ENCODE measurements at regions of chr17 and their contacts with region 1.

Region 1: GRCh38 chr17:8189711-8190477 is at the start of gene BORCS6:
- DNase-seq: peak; percentile 95 to 98
- H3K4me3 ChIP-seq: peak within 1 kb of the TSS; percentile 68 to 81
- H3K27ac ChIP-seq: peak within 1 kb of the TSS; percentile 97 to 99
- H3K4me1 ChIP-seq: peaks cover 8 to 13% of the 10 kb centered on the region in 2 donors
- H3K27me3 ChIP-seq: no peaks in the 10 kb centered on the region
- CTCF ChIP-seq: peak in 2 of 4 experiments; percentile 22 to 23
- POLR2A ChIP-seq: peak; percentile 85 to 89
- total RNA-seq, gene BORCS6: under 0.01 to 9.0 (median 6.1) TPM

Region 2: DNA sequence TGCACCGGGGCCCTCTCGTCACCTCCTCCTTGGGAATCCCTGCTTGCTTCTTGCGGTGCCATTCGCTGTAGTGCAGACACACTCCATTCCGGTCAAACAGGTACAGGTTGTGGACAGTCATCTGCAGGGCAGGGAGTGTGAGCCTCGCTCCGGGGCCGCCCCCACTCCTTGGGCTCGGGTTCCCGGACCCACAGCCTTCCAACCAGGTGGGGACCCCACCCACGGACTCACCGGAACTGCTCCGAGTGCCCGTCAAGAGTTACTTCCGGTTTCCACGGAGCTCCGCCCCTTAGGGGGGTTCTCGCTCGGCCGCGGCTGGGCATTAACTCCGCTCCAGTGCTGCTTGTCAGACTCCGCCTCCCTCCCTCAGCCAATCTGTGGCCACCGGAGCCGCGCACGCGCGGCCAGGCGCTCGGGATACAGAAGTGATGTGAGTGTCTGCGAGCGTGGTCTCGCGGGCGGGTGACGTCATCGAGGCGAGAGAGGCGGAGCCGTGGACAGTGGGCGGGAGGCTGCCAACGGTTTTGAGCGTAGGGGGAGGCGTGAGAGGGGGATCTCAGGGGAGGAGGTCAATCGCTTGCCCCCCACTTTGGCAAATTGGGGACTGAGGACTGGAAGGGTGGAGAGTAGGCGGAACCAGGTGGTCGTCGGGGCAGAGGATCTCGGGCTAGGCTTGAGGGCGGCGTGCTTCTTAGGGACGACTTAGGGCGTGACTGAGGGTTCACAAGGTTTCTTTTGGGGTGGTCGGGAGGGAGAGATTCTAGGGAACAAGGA is 258.0 kb before region 1 on chr17 and contains the starts of genes CNTROB and TRAPPC1:
- intact Hi-C with region 1: no loop called
- DNase-seq: peak; percentile 99 to 100
- H3K4me3 ChIP-seq: peak within 1 kb of the TSS; percentile 70 to 83
- H3K27ac ChIP-seq: peak within 1 kb of the TSS; percentile 86 to 87
- H3K4me1 ChIP-seq: peaks cover 0 to 17% of the 10 kb centered on the region in 2 donors
- H3K27me3 ChIP-seq: no peaks in the 10 kb centered on the region
- CTCF ChIP-seq: peak in 1 of 4 experiments; percentile 19
- POLR2A ChIP-seq: peak; percentile 86 to 93
- total RNA-seq, gene CNTROB: 7.1 to 58.5 (median 26.1) TPM
- total RNA-seq, gene TRAPPC1: 24.1 to 67.5 (median 27.8) TPM

Region 3: GRCh38 chr17:8119581-8120519 is 70.0 kb before region 1 on chr17:
- intact Hi-C with region 1: loop called (anchors 10 kb)
- DNase-seq: peak; percentile 78 to 82
- H3K4me3 ChIP-seq: peak overlapping the region; percentile 50 to 62
- H3K27ac ChIP-seq: peak overlapping the region; percentile 85 to 98
- H3K4me1 ChIP-seq: peaks cover 0 to 39% of the 10 kb centered on the region in 2 donors
- H3K27me3 ChIP-seq: no peaks in the 10 kb centered on the region
- CTCF ChIP-seq: peak in 1 of 4 experiments; percentile 4
- POLR2A ChIP-seq: no peak

Region 4: GRCh38 chr17:8222630-8223356 is 32.9 kb after region 1 on chr17:
- intact Hi-C with region 1: loop called (anchors 5 kb)
- DNase-seq: peak; percentile 96 to 97
- H3K4me3 ChIP-seq: peak overlapping the region; percentile 63 to 76
- H3K27ac ChIP-seq: peak overlapping the region; percentile 98 to 99
- H3K4me1 ChIP-seq: peaks cover 0 to 9% of the 10 kb centered on the region in 2 donors
- H3K27me3 ChIP-seq: no peaks in the 10 kb centered on the region
- CTCF ChIP-seq: no peak
- POLR2A ChIP-seq: peak; percentile 82 to 87

Measured in uterus (tissue), 4 donors.